Naive thymus-derived CD8-positive, alpha-beta T cell (primary cell): ENCODE measurements at regions of chr17 and their contacts with region 1.

Region 1: DNA sequence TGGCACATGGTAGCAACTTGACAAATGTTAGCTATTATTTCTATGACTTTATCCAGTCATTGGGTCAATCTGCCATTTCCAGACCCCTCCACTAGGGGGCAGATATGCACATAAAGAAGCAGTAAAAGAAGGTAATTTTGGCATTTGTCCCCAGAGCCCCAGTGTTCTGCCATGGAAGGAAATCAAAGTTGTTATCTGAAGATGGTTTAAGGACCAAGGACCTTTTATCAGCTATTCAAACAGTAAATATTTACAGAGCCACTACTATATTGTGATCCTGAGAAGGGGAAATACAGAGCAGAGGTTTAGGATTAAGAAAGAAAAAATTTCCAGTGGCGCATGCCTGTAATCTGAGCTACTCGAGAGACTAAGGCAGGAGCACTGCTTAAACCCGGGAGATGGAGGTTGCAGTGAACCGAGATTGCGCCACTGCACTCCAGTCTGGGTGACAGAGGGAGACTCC is 20.0 kb downstream of the TRAF4 start:
- DNase-seq: peak; percentile 50 to 91 (median 74)
- ATAC-seq: peak; percentile 71 to 80
- H3K4me3 Mint-ChIP-seq: no peak overlapping the region
- H3K27ac Mint-ChIP-seq: peak overlapping the region in 5 of 10 donors; percentile 3 to 90 (median 61)
- H3K4me1 Mint-ChIP-seq: peaks cover 2 to 6% (median 4%) of the 10 kb centered on the region in 4 donors
- H3K27me3 Mint-ChIP-seq: no peaks in the 10 kb centered on the region

Region 2: DNA sequence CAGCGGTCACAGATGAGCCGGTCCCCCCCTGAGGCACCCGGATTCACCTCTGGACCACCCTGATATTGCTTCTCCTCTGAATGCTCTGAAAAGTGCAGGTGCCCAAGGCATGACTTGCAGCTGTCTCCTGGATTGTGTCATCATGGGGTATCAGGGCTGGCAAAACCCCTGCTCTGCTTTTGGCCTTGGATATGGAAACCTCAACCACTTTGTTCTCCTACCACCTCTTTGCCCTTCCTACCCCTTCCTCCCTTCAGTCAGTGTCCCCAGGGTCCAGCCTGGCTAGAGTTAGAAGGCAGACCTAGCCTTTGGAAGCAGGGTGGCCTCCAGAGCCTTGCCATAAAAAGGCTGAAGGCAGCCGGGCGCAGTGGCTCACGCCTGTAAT is 21.9 kb before region 1 on chr17:
- POLR2A ChIA-PET with region 1: no interaction called
- DNase-seq: peak in 1 of 10 donors; percentile 52
- ATAC-seq: no peak
- H3K4me3 Mint-ChIP-seq: peak overlapping the region in 2 of 10 donors; percentile 24 to 58
- H3K27ac Mint-ChIP-seq: no peak overlapping the region
- H3K4me1 Mint-ChIP-seq: peaks cover 8 to 66% (median 35%) of the 10 kb centered on the region in 4 donors
- H3K27me3 Mint-ChIP-seq: no peaks in the 10 kb centered on the region

Region 3: DNA sequence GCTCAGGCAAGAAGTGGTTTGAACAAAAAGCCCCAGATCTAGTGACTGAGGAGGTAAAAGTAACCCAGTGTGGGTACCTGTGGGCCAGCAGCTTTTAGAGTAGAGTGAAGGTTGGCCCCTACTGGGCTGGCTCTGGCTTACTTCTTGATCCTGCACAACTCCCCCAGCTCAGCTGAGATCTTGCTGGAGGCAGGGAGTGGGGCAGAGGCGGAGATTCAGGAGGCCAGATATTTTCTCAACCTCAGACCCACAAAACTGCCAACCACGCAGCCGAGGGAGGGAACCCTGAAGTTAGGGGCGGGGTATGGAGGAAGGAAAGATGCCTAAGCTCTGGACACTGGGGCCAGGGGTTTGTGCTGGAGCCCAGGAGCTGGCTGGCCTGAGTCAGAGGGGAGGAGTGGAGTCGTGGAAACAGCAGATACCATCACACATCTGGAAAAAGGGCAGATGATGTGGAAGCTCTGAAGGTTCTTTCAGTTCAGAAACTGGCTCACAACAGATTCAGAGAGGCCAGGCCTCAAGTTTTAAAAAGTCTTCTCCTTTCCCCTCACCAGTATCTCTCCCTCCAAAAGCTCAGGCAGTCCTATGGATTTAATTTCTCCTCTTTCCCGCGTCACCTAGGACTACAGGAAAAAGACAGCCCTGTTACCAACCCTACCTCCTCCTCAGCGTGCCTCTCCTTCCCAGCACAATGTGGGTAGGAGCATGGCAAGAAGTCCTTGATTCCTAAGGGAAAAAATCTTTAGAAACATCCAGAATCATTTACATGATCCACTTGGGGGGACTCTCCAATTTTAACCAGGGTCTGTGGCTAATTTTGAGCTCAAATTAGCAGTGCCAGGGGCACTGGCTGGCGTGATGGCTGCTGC is 368.2 kb after region 1 on chr17:
- POLR2A ChIA-PET with region 1: interaction called, 12 read pairs
- DNase-seq: no peak
- ATAC-seq: no peak
- H3K4me3 Mint-ChIP-seq: no peak overlapping the region
- H3K27ac Mint-ChIP-seq: peak overlapping the region in 8 of 10 donors; percentile 20 to 76 (median 54)
- H3K4me1 Mint-ChIP-seq: peaks cover 6 to 44% (median 24%) of the 10 kb centered on the region in 4 donors
- H3K27me3 Mint-ChIP-seq: no peaks in the 10 kb centered on the region